H1 (cell line): ENCODE measurements at regions of chr7 and their contacts with region 1.

Region 1: GRCh38 chr7:129163875-129164544 is 19.5 kb downstream of the TSPAN33 start:
- DNase-seq: no peak
- H3K4me3 ChIP-seq: no peak overlapping the region
- H3K27ac ChIP-seq: no peak overlapping the region
- H3K4me1 ChIP-seq: peaks cover 2 to 13% (median 12%) of the 10 kb centered on the region in 4 experiments
- H3K27me3 ChIP-seq: no peaks in the 10 kb centered on the region; a peak in 1 of 7 replicates
- CTCF ChIP-seq: peak in 2 of 3 experiments; percentile 45 to 70; a peak in 2 of 4 replicates
- EP300 ChIP-seq: no peak
- POLR2A ChIP-seq: no peak
- RAD21 ChIP-seq: peak; percentile 48 to 52

Region 2: DNA sequence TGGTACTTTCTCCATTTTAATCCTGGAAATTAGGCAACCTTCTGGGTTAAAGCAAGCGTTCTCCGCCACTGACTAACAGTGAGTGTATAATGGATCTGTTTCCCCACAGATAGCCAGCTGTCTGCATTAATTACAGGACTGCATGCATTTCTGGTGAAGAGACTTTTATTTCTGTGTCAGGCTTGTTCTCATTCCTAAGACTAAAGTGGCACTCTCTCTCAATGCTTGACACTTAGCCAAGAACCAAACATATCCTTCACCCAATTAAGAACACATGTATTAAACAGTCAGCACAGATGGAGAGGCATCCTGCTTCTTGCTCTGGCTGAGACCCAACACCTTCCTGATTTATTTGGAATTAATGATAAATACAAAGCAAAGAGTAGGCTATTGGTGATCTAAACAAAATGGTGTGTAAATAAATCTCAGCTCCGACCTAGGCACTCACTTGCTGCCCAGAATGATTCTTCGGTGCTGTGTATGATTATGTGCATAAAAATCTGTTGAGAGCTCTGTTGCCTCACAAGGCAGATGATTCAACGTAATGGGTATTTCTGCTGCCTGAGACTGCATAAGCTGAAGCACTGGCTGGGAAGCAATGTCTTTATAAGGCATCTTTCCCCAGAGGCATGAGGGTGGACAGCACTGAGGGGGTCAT is 408.1 kb before region 1 on chr7:
- CTCF ChIA-PET with region 1: no interaction called
- POLR2A ChIA-PET with region 1: no interaction called
- DNase-seq: no peak
- H3K4me3 ChIP-seq: no peak overlapping the region
- H3K27ac ChIP-seq: no peak overlapping the region
- H3K4me1 ChIP-seq: no peaks in the 10 kb centered on the region
- H3K27me3 ChIP-seq: no peaks in the 10 kb centered on the region
- CTCF ChIP-seq: no peak
- EP300 ChIP-seq: no peak
- POLR2A ChIP-seq: no peak
- RAD21 ChIP-seq: no peak

Region 3: DNA sequence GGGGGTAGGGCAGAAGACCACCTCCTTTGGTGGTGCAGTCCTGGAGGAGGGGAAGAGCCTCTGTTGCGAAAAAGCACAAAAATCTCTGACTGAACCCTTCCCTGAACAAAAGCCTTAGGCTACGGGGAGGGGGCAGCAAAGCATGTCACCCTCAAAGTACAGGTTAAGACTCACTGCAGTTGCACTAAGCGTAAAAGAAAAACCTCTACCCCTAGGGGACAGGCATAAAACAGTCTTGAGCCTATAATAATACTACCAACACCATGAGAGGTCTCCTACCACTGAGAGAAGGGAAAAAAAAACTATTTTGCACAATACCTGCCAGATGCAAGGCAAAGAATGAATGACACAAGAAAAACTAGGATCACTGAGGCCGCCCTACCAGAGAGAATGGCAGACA is 126.4 kb before region 1 on chr7:
- CTCF ChIA-PET with region 1: no interaction called
- POLR2A ChIA-PET with region 1: no interaction called
- DNase-seq: no peak
- H3K4me3 ChIP-seq: no peak overlapping the region
- H3K27ac ChIP-seq: 0 out of 2 replicates have a peak overlapping the region, but pooled peaks have one; percentile 25
- H3K4me1 ChIP-seq: peaks cover 3 to 16% (median 6%) of the 10 kb centered on the region in 4 experiments; a peak in 6 of 7 replicates
- H3K27me3 ChIP-seq: no peaks in the 10 kb centered on the region
- CTCF ChIP-seq: no peak
- EP300 ChIP-seq: no peak
- POLR2A ChIP-seq: no peak
- RAD21 ChIP-seq: no peak

Region 4: GRCh38 chr7:129126314-129126713 is 37.7 kb before region 1 on chr7:
- CTCF ChIA-PET with region 1: interaction called, 13 read pairs
- POLR2A ChIA-PET with region 1: interaction called, 7 read pairs
- DNase-seq: peak in 1 of 2 experiments; percentile 57
- H3K4me3 ChIP-seq: no peak overlapping the region
- H3K27ac ChIP-seq: no peak overlapping the region
- H3K4me1 ChIP-seq: no peaks in the 10 kb centered on the region
- H3K27me3 ChIP-seq: peaks cover 0 to 2% (median 0%) of the 10 kb centered on the region in 4 experiments; a peak in 2 of 7 replicates
- CTCF ChIP-seq: no peak
- EP300 ChIP-seq: no peak
- POLR2A ChIP-seq: no peak
- RAD21 ChIP-seq: no peak

Region 5: DNA sequence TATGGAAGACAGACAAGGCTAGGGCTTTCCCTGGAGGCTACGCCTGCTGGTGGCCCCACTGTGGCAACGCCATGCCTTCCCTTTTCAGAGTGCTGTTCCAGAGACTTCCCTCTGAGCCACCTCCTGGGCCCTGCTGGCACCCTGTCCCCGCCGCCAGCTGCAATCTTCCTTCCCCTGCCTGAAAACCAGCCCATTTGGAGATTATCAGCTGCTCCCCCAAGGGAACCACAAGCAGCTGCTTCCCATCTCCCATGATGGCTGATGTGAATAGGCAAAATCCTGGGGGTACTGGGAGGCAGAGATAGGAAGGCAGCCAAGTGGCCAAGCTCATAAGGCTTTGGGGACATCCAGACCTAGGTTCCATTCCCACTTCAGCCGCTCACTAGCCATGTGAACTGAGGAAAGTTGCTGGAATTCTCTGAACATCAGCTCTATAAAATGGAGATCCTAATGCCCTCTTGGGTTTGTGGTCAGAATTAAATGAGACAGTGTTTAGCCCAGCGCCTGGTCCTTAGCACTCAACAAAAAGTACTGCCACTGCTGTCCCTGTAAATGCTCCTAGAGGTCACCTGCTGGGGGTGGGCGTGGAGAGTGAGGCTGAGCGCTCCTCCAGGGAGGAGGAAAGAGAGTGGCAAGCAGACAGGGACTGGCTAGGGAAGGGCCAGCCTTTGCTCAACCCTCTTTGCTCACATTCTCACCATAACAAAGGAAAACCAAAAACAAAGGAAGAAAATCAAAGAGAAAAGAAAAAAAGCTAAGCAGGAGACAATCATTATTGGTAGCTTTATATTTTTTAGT is 13.6 kb before region 1 on chr7:
- CTCF ChIA-PET with region 1: interaction called, 27 read pairs
- POLR2A ChIA-PET with region 1: interaction called, 13 read pairs
- DNase-seq: no peak
- H3K4me3 ChIP-seq: no peak overlapping the region
- H3K27ac ChIP-seq: no peak overlapping the region
- H3K4me1 ChIP-seq: peaks cover 6 to 14% (median 7%) of the 10 kb centered on the region in 4 experiments
- H3K27me3 ChIP-seq: no peaks in the 10 kb centered on the region
- CTCF ChIP-seq: no peak
- EP300 ChIP-seq: no peak
- POLR2A ChIP-seq: no peak
- RAD21 ChIP-seq: no peak

Region 6: GRCh38 chr7:129193892-129194291 is 29.9 kb after region 1 on chr7:
- CTCF ChIA-PET with region 1: interaction called, 26 read pairs
- POLR2A ChIA-PET with region 1: interaction called, 116 read pairs
- DNase-seq: no peak
- H3K4me3 ChIP-seq: no peak overlapping the region
- H3K27ac ChIP-seq: no peak overlapping the region
- H3K4me1 ChIP-seq: peaks cover 3 to 7% (median 5%) of the 10 kb centered on the region in 4 experiments; a peak in 6 of 7 replicates
- H3K27me3 ChIP-seq: no peaks in the 10 kb centered on the region
- CTCF ChIP-seq: no peak
- EP300 ChIP-seq: no peak
- POLR2A ChIP-seq: no peak
- RAD21 ChIP-seq: no peak

Region 7: DNA sequence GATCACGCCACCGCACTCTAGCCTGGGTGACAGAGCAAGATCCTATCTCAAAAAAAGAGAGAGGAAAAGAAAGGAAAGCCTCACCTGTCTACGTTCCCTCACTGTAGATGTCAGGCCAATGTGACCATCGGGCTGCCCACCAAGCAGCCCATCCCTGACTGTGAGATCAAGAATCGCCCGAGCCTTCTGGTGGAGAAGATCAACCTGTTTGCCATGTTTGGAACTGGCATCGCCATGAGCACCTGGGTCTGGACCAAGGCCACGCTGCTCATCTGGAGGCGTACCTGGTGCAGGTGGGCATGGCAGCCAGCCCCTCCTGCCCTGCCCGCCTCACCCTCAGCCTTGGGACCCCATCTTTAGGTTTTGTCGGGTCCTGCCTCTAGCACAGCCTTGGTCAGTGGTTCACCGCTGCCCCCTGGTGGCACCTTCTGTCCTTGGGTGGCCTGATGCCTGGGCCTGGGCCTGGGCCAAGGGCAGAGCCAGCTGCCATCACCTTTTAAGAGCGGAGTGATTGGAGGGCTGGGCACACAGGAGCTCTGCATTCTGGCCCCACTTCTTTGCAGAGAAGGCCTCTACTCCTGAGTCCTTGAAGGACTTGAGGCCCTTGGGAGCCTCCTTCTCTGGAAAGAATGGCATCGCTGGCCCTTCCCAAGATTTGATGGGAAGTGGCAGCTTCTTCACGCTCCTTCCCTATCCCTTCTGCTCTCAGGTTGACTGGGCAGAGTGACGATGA is 46.4 kb after region 1 on chr7:
- CTCF ChIA-PET with region 1: interaction called, 258 read pairs
- POLR2A ChIA-PET with region 1: interaction called, 12 read pairs
- DNase-seq: peak; percentile 41 to 98
- H3K4me3 ChIP-seq: no peak overlapping the region
- H3K27ac ChIP-seq: no peak overlapping the region
- H3K4me1 ChIP-seq: no peaks in the 10 kb centered on the region
- H3K27me3 ChIP-seq: no peaks in the 10 kb centered on the region
- CTCF ChIP-seq: peak; percentile 93 to 97 (median 94)
- EP300 ChIP-seq: no peak
- POLR2A ChIP-seq: no peak
- RAD21 ChIP-seq: peak; percentile 93 to 96